ENCODE measurements at regions of chr2 and their contacts with region 1.

Region 1: GRCh38 chr2:54194761-54195750 is 61.0 kb downstream of the TSPYL6 start:
- H3K4me3 ChIP-seq: no peak overlapping the region
- H3K27ac ChIP-seq: no peak overlapping the region
- H3K4me1 ChIP-seq: no peaks in the 10 kb centered on the region
- CTCF ChIP-seq: no peak

Region 2: GRCh38 chr2:54065411-54065810 is 129.6 kb before region 1 on chr2:
- CTCF ChIA-PET with region 1: no interaction called
- POLR2A ChIA-PET with region 1: no interaction called
- H3K4me3 ChIP-seq: no peak overlapping the region
- H3K27ac ChIP-seq: no peak overlapping the region
- H3K4me1 ChIP-seq: no peaks in the 10 kb centered on the region
- CTCF ChIP-seq: no peak

Region 3: DNA sequence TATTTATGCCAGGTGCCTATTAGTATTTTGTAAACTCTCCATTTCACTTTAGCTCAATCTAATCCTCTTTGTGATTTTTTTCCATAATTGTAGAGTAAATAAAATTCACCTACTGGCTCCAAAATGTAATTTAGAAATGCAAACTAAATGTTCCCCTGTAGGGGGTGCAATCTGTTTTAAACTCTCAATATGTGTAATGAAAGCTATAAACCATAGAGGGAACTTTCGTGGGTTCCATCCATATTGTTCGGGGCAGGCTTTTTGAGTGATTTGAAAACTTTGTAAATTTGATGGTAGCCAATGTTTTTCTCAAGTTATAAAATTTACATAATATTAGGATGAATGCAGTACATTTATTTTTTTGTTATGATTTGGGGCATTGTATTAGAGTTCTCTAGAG is 11.5 kb after region 1 on chr2:
- CTCF ChIA-PET with region 1: interaction called, 19 read pairs
- POLR2A ChIA-PET with region 1: no interaction called
- H3K4me3 ChIP-seq: no peak overlapping the region
- H3K27ac ChIP-seq: no peak overlapping the region
- H3K4me1 ChIP-seq: no peaks in the 10 kb centered on the region
- CTCF ChIP-seq: no peak